Common myeloid progenitor, CD34-positive (primary cell): ENCODE measurements at regions of chr20 and their contacts with region 1.

Region 1: DNA sequence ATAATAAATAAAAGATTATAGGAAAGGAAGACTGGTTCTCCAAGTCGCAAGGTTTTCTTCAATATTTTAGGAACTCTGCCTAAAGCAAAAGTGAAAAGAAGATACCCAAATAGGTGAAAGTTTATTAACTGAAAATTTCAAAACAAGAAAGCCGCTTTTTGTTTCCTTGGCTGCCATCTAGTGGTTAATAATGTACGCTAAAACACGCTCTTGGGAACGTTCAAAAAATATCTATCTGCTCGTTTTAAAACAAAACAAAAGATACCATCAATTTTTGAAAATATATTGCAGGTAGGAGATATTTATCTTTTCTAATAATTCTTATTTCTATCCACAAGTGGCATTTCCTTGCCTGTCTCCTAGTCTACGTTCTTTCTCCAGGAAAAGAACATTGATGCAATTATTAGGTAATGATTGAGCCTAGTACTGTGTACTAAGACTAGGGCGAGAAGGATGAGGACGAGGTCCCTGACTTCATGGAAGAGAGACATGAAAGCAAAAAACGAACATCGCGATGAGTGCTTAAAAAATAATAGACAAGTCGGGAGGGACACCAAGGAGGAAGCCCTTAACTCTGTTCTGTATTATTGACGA is 97.2 kb downstream of the SPTLC3 start:
- DNase-seq: peak; percentile 43 to 68 (median 58)
- H3K4me3 ChIP-seq: no peak overlapping the region
- H3K27ac ChIP-seq: no peak overlapping the region
- H3K4me1 ChIP-seq: no peaks in the 10 kb centered on the region
- H3K27me3 ChIP-seq: peaks cover 0 to 10% (median 0%) of the 10 kb centered on the region in 5 experiments

Region 2: DNA sequence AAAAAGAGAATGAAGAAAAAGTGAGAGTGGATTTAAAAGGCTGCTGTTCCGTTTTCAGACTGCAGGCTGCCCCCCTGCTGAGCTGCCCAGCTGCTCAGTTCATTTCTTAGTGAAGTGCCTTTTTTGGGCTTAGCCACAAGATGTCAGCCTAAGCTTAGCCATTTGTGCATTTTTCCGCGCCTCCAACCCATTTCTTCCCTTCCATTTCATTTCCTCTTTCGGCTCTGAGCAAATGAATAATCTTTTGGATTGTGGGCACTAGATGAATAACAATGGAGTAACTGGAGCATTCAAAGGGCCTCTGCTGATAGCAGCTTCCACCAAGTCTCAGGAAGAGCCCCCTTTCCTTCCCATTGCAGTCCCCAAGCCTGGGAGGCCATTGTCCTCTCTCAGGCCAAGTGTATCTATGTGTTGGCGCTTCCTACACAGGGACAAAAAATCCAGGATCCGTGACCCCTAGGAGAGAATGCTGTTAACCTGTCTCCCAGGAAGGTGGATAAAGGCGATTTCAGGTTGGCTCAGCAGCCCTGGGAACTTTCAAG is 180.7 kb before region 1 on chr20:
- CTCF ChIA-PET with region 1: interaction called, 28 read pairs
- POLR2A ChIA-PET with region 1: no interaction called
- DNase-seq: peak; percentile 83 to 92 (median 92)
- H3K4me3 ChIP-seq: peak overlapping the region in 3 of 7 experiments; percentile 29 to 62 (median 38)
- H3K27ac ChIP-seq: no peak overlapping the region
- H3K4me1 ChIP-seq: peaks cover 7 to 47% (median 18%) of the 10 kb centered on the region in 4 experiments
- H3K27me3 ChIP-seq: peaks cover 0 to 4% (median 0%) of the 10 kb centered on the region in 5 experiments

Region 3: DNA sequence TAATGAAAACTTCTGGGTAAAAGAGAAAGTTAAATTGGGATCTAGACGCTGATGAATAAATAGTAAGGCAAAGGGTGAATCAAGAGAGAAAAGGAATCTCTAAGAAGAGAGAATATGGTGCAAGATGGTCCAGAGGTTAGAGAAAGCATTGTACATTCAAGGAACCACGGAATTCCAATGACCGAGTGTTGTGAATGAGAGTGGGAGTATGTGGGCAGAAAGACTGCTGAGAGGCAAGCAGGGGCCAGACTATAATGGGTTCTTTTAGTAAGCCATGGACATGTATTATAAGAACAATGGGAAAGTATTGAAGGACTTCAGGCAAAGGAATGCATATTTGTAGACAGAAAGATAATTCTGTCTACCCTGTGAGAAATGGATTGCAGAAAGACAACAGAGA is 52.0 kb before region 1 on chr20:
- CTCF ChIA-PET with region 1: no interaction called
- POLR2A ChIA-PET with region 1: no interaction called
- DNase-seq: no peak
- H3K4me3 ChIP-seq: no peak overlapping the region
- H3K27ac ChIP-seq: no peak overlapping the region
- H3K4me1 ChIP-seq: no peaks in the 10 kb centered on the region
- H3K27me3 ChIP-seq: no peaks in the 10 kb centered on the region